CD4-positive, alpha-beta T cell (primary cell): ENCODE measurements at regions of chr2 and their contacts with region 1.

Region 1: DNA sequence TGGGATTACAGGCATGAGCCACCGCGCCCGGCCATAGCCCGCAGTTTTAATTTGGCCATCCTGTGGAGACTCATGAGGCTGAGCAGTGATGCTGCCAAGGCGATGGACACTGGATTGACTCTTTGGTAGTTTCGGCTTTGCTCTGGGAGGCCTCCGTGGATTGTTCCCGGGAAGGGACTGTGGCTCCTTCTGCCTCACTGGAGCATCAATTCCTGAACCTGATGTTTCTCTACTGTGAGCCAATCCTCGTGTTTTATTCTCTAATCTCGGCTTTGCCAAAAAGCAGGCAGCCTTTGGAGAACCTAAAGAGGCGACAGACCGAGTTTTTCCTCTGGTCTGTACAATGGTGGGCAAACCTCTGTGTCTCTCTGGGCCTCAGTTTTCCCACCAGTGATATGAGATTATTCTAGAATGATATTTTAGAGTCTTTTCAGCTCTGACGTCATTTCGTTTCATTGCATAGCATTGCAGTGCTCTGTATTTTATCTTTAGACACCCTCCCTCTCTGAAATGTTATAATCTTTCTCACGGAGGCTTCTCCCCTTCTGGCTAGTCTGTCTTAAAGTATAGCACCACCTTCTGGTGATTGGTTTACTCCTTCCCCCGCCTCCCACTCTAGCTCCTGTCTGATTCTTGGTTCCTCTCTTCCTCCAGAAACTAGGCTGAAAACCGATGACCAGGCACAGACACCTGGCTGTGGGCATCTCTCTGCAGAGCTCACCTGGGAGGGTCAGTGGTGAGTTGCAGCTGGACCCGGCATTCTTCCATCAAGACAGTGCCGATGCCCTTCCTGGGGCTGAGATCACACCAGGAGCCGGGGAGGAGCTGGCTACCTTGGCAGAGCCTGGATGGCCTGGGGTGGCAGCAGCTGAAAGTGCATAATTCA is 341.3 kb downstream of the MYCN start:
- DNase-seq: peak in 2 of 14 experiments; percentile 12 to 26
- ATAC-seq: no peak
- H3K4me3 ChIP-seq: no peak overlapping the region
- H3K4me3 Mint-ChIP-seq: no peak overlapping the region
- H3K27ac ChIP-seq: no peak overlapping the region
- H3K27ac Mint-ChIP-seq: no peak overlapping the region
- H3K4me1 ChIP-seq: no peaks in the 10 kb centered on the region
- H3K4me1 Mint-ChIP-seq: no peaks in the 10 kb centered on the region
- H3K27me3 ChIP-seq: peaks cover 0 to 2% of the 10 kb centered on the region in 2 experiments
- H3K27me3 Mint-ChIP-seq: no peaks in the 10 kb centered on the region
- CTCF ChIP-seq: no peak

Region 2: DNA sequence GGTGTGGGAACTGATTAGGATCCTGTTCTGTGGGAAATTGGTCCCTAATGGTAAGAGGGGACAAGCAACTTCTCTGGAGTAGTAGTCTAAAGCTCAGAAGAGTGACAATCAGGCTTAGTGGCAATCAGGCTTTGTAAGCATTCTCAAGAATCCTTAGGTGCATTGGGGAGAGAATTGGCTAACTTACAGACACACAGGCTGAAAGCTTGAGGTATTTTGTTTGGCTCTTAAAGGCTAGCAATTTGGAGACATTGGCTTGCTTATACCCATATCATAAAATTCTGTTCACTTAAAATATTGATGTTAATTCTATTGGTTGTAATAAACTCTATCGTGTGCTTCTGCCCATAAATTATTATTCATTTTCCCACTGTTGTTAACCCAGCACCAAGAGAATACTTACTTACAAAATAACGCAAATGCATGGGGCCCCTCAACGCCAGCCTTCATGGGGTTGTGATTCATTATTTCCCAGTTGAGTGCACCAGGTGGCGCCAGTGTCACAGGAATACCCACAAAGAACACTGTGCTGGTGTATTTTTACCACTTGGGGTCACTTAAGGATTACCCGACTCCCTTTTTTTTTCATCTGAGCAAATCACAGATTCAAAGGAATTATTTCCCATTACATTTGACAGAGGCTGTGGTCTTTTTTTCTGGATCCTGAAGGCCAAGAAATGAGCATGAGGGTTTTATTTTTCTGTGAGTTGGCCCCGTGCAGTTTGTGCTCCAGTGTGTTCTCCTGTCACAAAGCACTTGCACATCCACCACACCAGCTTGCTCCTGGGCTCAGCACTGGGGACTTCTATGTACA is 644.5 kb before region 1 on chr2:
- CTCF ChIA-PET with region 1: no interaction called
- POLR2A ChIA-PET with region 1: no interaction called
- intact Hi-C with region 1: loop called (anchors 2 to 5 kb)
- DNase-seq: peak; percentile 27 to 74 (median 47)
- ATAC-seq: peak; percentile 80
- H3K4me3 ChIP-seq: no peak overlapping the region
- H3K4me3 Mint-ChIP-seq: no peak overlapping the region
- H3K27ac ChIP-seq: no peak overlapping the region
- H3K27ac Mint-ChIP-seq: peak overlapping the region; percentile 49
- H3K4me1 ChIP-seq: no peaks in the 10 kb centered on the region
- H3K4me1 Mint-ChIP-seq: peaks cover 7% of the 10 kb centered on the region
- H3K27me3 ChIP-seq: no peaks in the 10 kb centered on the region
- H3K27me3 Mint-ChIP-seq: no peaks in the 10 kb centered on the region
- CTCF ChIP-seq: peak; percentile 94